H1 (cell line): ENCODE measurements at regions of chrX and their contacts with region 1.

Region 1: GRCh38 chrX:155105919-155106318 is 34.6 kb downstream of the BRCC3 start:
- DNase-seq: no peak
- H3K4me3 ChIP-seq: no peak overlapping the region
- H3K27ac ChIP-seq: no peak overlapping the region
- H3K4me1 ChIP-seq: no peaks in the 10 kb centered on the region
- H3K27me3 ChIP-seq: no peaks in the 10 kb centered on the region
- CTCF ChIP-seq: no peak
- EP300 ChIP-seq: no peak
- POLR2A ChIP-seq: no peak
- RAD21 ChIP-seq: no peak

Region 2: GRCh38 chrX:154908821-154909220 is 197.1 kb before region 1 on chrX:
- CTCF ChIA-PET with region 1: no interaction called
- POLR2A ChIA-PET with region 1: no interaction called
- DNase-seq: no peak
- H3K4me3 ChIP-seq: no peak overlapping the region
- H3K27ac ChIP-seq: no peak overlapping the region
- H3K4me1 ChIP-seq: no peaks in the 10 kb centered on the region
- H3K27me3 ChIP-seq: no peaks in the 10 kb centered on the region
- CTCF ChIP-seq: no peak
- EP300 ChIP-seq: no peak
- POLR2A ChIP-seq: no peak
- RAD21 ChIP-seq: no peak

Region 3: GRCh38 chrX:155048977-155049619 is 56.8 kb before region 1 on chrX:
- CTCF ChIA-PET with region 1: no interaction called
- POLR2A ChIA-PET with region 1: no interaction called
- DNase-seq: peak in 1 of 2 experiments; percentile 68
- H3K4me3 ChIP-seq: no peak overlapping the region
- H3K27ac ChIP-seq: no peak overlapping the region
- H3K4me1 ChIP-seq: peaks cover 0 to 7% (median 2%) of the 10 kb centered on the region in 4 experiments; a peak in 2 of 7 replicates
- H3K27me3 ChIP-seq: no peaks in the 10 kb centered on the region
- CTCF ChIP-seq: peak; percentile 73 to 79 (median 76)
- EP300 ChIP-seq: no peak
- POLR2A ChIP-seq: no peak
- RAD21 ChIP-seq: peak; percentile 21 to 47; a peak in 3 of 4 replicates

Region 4: GRCh38 chrX:155094468-155095061 is 11.4 kb before region 1 on chrX:
- CTCF ChIA-PET with region 1: interaction called, 16 read pairs
- POLR2A ChIA-PET with region 1: no interaction called
- DNase-seq: no peak
- H3K4me3 ChIP-seq: no peak overlapping the region
- H3K27ac ChIP-seq: no peak overlapping the region
- H3K4me1 ChIP-seq: no peaks in the 10 kb centered on the region
- H3K27me3 ChIP-seq: no peaks in the 10 kb centered on the region
- CTCF ChIP-seq: peak in 2 of 3 experiments; percentile 32 to 57; a peak in 3 of 4 replicates
- EP300 ChIP-seq: no peak
- POLR2A ChIP-seq: no peak
- RAD21 ChIP-seq: peak; percentile 23 to 26; a peak in 2 of 4 replicates